ENCODE measurements at regions of chr15 and their contacts with region 1.

Region 1: DNA sequence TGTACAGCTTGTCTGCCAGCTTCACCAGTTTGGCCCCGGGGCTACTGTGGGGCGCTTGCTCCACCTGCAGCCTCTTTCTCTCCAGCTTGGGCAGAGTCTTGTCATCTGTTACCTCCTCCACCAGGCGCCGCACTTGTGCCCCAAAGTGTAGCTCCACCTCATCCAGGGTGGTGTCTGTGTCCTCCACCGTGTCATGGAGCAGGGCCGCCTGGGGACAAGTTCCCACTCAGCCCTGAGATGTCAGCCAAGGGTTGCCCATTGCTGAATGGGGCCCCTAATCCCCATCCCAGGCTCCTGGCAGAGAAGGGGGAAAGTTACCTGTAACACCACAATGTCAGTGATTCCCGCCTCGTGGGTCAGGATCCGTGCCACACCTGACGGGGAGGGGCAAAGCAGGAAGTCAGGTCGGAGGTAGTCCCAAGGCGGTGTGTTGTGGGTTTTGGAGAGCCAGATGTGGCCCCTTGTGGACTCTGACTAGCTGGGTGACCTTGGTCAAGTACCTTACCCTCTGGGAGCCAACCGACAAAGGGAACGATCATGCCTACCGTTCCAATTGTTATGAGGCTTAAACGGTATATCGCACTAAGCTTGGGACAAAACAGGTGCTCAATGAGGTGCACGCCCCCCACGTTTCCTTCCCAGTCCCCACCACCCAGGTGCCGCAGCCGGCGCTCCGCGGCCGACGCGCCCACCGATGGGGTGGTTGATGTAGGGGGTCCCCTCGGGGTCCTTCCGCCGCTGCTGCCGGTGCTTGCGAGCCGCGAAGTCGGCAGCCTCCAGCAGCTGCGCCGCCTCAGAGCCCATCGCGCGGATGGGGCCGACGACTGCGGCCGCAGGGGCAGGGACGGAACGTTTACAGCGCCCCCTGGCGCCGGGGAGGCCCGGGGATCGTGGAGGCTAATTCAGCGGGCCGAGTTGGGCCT is at the start of gene HDDC3:
- DNase-seq: peak; percentile 97
- total RNA-seq, gene HDDC3: 11.8 TPM

Region 2: DNA sequence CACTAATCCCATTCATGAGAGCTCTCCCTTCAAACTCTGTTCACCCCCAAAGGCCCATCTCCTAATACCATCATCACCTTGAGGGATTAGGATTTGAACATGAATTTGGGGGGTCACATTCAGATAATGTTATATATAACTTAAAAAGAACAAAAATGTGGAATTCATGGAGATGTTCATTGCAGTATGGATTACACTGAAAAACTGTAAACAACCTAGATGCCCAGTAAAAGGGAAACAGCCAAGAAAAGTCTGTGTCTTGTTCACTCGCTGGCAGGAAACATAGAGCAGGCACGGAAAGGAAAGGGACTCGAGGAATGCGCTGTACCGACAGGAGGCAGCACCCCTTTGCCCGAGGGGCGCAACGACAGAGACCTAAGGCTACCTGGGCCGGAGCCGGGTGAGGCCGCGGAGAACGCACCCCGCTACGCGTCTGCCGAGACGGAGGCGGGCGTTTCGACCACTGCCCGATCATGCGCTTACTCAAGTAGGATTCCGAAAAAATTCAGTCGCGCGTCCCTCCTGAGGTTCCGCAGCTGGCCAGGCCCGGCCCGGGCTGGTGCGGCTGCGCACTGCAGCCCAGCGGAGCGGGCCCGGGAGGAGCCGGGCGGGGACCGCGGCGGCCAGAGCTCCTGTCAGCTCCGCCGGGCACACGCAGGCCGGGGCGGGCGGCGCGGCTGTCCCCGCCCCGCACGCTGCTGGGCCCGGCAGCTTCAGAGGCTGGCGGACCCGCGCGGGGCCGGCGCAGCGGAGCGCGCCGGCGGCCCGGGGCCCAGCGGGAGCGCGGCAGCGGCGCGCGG is 29.8 kb before region 1 on chr15:
- intact Hi-C with region 1: loop called (anchors 1 kb)
- DNase-seq: peak; percentile 93